ENCODE measurements at regions of chr19 and their contacts with region 1.

Region 1: DNA sequence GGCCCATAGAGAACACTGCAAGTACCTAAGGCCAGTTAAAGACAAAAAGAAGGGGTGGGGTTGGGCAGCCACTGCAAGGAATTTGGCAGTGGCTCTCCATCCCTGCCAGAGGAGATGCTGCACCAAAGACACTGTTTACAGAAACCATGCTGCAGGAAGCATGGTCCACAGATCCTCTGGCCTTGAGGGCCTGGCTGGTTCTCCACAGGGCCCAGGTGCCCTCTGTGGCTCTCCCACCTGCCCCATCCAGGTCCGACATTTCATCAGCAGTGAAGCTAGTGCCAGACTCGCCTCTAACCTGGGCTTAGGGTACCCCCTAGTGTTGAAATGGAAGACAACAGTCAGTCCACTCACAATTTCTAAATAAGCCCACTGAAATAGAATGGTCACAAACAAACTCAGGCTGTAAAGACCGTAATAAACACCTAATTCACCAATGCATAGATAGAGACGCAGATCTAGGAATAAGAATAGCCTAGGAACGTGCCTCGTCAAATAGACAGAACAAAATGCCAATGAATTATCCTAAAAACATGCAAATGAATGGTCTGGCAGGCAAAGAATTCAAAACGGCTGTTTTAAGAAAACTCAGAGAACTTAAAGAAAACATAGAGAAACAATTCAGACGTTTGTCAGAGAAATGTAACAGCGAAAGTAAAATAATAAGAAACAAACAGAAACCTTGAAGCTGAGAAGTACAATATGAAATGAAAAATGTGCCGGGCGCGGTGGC is 23.3 kb downstream of the LYPD4 start:
- DNase-seq: peak; percentile 66
- H3K4me3 Mint-ChIP-seq: no peak overlapping the region
- H3K27ac Mint-ChIP-seq: no peak overlapping the region
- H3K4me1 Mint-ChIP-seq: no peaks in the 10 kb centered on the region
- H3K27me3 Mint-ChIP-seq: peaks cover 28% of the 10 kb centered on the region

Region 2: GRCh38 chr19:41746593-41747227 is 74.5 kb before region 1 on chr19:
- CTCF ChIA-PET with region 1: no interaction called
- POLR2A ChIA-PET with region 1: no interaction called
- DNase-seq: peak; percentile 60
- H3K4me3 Mint-ChIP-seq: no peak overlapping the region
- H3K27ac Mint-ChIP-seq: no peak overlapping the region
- H3K4me1 Mint-ChIP-seq: peaks cover 2% of the 10 kb centered on the region
- H3K27me3 Mint-ChIP-seq: peaks cover 60% of the 10 kb centered on the region

Region 3: DNA sequence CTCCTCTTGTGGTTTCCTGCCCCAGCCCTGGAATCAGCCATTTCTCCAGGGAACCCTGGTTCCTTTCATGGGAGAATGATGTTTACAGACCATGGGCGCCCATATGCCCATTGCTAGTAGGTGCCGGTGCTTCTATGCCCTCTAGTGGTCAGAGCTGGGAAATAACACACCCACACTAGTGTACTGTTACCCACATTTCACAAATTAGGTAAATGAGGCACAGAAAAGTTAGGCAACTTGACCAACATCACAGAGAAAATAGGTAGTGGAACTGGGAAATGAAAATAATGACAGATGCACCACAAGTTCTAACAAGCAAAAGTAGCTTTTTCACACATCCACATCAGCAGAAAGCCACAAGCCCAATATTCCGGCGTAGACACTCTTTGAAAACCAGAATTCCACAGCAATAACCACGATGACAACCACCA is 26.1 kb before region 1 on chr19:
- CTCF ChIA-PET with region 1: interaction called, 10 read pairs
- POLR2A ChIA-PET with region 1: no interaction called
- DNase-seq: peak; percentile 77
- H3K4me3 Mint-ChIP-seq: no peak overlapping the region
- H3K27ac Mint-ChIP-seq: no peak overlapping the region
- H3K4me1 Mint-ChIP-seq: no peaks in the 10 kb centered on the region
- H3K27me3 Mint-ChIP-seq: peaks cover 41% of the 10 kb centered on the region

Region 4: GRCh38 chr19:41847351-41848105 is 26.4 kb after region 1 on chr19:
- CTCF ChIA-PET with region 1: no interaction called
- POLR2A ChIA-PET with region 1: no interaction called
- DNase-seq: no peak
- H3K4me3 Mint-ChIP-seq: no peak overlapping the region
- H3K27ac Mint-ChIP-seq: no peak overlapping the region
- H3K4me1 Mint-ChIP-seq: no peaks in the 10 kb centered on the region
- H3K27me3 Mint-ChIP-seq: peaks cover 14% of the 10 kb centered on the region

Measured in activated CD4-positive, alpha-beta T cell treated with anti-CD3 and anti-CD28 coated beads, Interleukin-2, amount 10 ng/mL, durations not matched to agents 7 days and 5 days (primary cell).